Esophagus muscularis mucosa (tissue), 4 donors: ENCODE measurements at regions of chr12 and their contacts with region 1.

Region 1: GRCh38 chr12:93569656-93570551 is 2.6 kb upstream of the SOCS2 start:
- DNase-seq: peak; percentile 97
- H3K4me3 ChIP-seq: peak overlapping the region; percentile 71 to 90 (median 78)
- H3K27ac ChIP-seq: peak overlapping the region; percentile 91 to 95 (median 92)
- H3K4me1 ChIP-seq: peaks cover 3 to 44% (median 23%) of the 10 kb centered on the region in 4 donors
- H3K27me3 ChIP-seq: peaks cover 0 to 16% (median 0%) of the 10 kb centered on the region in 4 donors
- CTCF ChIP-seq: peak; percentile 87 to 89 (median 88)
- EP300 ChIP-seq: no peak
- POLR2A ChIP-seq: no peak

Region 2: GRCh38 chr12:93612776-93613175 is 42.9 kb after region 1 on chr12:
- intact Hi-C with region 1: no loop called
- DNase-seq: no peak
- H3K4me3 ChIP-seq: no peak overlapping the region
- H3K27ac ChIP-seq: no peak overlapping the region
- H3K4me1 ChIP-seq: no peaks in the 10 kb centered on the region
- H3K27me3 ChIP-seq: no peaks in the 10 kb centered on the region
- CTCF ChIP-seq: no peak
- EP300 ChIP-seq: no peak
- POLR2A ChIP-seq: no peak

Region 3: DNA sequence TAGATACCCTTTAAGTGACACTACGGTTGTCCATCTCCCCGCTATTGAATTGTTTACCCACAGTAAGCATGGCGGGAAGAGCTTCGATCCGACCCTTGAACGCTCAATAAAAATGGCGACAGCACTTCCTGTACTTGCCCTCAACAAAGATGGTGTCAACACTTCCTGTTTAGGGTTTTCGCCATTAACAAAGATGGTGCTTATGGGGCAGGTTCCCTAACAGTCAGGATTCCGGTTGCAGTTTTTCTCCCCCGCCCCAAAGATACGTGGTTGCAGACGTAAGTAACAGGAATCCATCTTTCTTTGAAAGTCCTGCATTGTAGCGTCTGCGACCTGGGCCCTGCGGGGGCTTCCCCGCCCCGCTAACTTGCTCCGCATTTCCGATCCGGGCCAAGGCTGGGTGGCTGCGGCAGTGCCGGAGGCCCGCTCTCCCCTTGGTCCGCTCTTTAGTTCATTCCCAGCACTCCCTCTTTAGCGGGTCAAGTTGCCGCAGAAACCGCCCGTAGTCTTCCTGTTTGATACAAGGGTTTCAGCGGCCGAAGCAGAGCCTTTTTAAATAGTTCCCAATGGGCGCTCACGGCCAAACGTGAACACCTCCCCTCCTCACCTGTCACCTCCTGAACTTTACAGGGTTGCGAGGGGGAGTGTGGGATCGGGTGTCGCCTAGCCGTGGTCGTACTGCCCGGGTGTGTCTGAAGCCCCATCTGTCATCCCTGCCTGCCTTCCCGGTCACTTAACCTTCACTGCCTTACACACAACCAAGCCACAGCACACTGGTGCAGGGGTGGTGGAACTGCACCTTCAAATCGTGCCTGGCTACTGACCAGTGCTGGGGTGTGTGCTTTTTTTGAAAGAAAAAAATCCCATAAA is 107.5 kb after region 1 on chr12 and contains the start of gene CRADD:
- intact Hi-C with region 1: loop called (anchors 5 kb)
- DNase-seq: peak; percentile 95
- H3K4me3 ChIP-seq: peak within 1 kb of the TSS; percentile 67 to 84 (median 75)
- H3K27ac ChIP-seq: peak within 1 kb of the TSS; percentile 93 to 97 (median 95)
- H3K4me1 ChIP-seq: peaks cover 19 to 40% (median 29%) of the 10 kb centered on the region in 4 donors
- H3K27me3 ChIP-seq: no peaks in the 10 kb centered on the region
- CTCF ChIP-seq: peak in 1 of 3 experiments; percentile 19
- EP300 ChIP-seq: no peak
- POLR2A ChIP-seq: no peak
- total RNA-seq, gene CRADD: 23.5 to 35.3 (median 26.1) TPM

Region 4: DNA sequence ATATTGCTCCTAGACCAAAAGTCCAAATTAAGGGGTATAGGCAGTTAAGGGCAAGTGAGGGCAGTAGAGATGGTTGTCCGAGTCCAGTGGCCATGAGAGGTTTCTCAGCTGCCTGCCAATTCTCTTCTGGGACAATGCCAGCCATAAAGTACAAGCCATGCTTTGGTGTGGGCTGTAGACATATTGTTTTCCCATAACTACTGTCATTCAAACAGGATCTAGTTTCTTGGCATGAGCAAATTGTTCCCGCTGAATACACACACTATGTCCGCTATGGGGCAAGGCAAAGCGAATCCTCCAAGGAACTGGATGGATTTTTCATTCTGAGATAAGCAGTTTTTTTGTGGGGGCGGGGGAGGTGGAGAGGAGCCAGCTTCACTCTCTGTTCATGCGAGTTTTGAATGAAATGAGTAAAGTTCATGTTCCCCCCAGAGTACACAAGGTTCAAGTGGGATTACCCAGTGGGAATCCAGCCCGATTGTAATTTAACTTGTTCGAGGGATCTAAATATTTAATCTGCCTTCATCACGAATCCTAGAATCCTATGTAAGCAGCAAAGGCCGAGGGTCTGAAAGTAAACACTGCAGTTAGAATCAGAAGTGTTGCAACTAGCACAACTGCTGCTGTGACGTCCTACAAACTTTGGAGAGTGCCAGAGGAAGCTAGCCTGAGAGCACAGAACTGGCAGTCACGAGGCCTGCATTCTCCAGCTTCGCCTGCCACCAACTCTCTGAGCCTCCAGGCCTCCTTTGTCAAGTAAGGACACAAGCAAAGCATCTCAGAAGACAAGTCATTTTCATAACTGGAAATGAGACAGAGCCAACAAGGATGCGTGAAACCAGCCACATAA is 244.3 kb after region 1 on chr12:
- intact Hi-C with region 1: loop called (anchors 5 kb)
- DNase-seq: peak; percentile 95
- H3K4me3 ChIP-seq: peak overlapping the region in 3 of 4 donors; percentile 8 to 28 (median 17)
- H3K27ac ChIP-seq: peak overlapping the region; percentile 82 to 89 (median 86)
- H3K4me1 ChIP-seq: peaks cover 55 to 81% (median 79%) of the 10 kb centered on the region in 4 donors
- H3K27me3 ChIP-seq: no peaks in the 10 kb centered on the region
- CTCF ChIP-seq: peak in 1 of 3 experiments; percentile 19
- EP300 ChIP-seq: peak; percentile 85
- POLR2A ChIP-seq: peak; percentile 8

Region 5: GRCh38 chr12:93979189-93979588 is 409.3 kb after region 1 on chr12:
- intact Hi-C with region 1: loop called (anchors 2 kb)
- DNase-seq: no peak
- H3K4me3 ChIP-seq: no peak overlapping the region
- H3K27ac ChIP-seq: no peak overlapping the region
- H3K4me1 ChIP-seq: peaks cover 0 to 11% (median 7%) of the 10 kb centered on the region in 4 donors
- H3K27me3 ChIP-seq: no peaks in the 10 kb centered on the region
- CTCF ChIP-seq: peak; percentile 48 to 56 (median 56)
- EP300 ChIP-seq: no peak
- POLR2A ChIP-seq: no peak